ENCODE measurements at regions of chr6 and their contacts with region 1.

Region 1: DNA sequence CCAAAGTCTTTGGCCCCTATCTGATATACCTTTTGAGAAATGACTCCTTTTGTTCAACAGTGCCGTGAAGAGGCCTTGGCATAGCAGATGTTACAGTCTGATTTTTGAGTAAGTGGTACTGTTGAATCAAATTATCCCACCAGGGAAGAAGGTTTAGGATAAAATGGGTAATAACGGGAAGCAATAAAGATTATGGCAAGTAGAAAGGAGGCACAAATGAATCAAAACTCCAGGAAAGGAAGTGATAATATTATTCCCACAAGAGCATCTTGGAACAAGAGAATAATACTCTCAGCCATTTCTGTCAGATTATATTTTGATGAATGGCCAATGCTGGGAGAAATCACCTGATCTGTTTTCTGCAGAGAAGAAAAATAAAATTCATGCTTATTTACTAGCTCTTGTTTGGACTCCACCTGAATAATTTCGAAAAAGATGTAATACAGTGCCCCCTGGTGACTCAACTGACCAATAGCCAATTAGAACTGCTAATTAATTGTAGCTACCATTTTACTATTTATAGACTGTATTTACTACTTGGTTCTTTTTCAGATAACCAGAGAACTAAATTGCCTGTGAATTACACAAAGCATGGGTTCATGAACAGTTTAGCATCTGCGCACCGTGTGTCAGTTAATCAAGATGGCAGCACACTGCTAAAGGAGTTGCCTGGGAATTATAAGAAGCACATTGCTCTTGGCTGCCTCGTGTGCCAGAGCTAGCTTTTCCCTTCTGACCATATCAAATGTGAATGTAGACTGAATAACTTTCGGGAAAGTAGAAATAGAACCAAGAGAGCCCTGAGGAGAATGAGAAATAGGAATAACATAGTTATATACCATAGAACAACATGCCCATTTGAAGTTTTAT is 78.5 kb upstream of the TRDN start:
- DNase-seq: no peak

Region 2: DNA sequence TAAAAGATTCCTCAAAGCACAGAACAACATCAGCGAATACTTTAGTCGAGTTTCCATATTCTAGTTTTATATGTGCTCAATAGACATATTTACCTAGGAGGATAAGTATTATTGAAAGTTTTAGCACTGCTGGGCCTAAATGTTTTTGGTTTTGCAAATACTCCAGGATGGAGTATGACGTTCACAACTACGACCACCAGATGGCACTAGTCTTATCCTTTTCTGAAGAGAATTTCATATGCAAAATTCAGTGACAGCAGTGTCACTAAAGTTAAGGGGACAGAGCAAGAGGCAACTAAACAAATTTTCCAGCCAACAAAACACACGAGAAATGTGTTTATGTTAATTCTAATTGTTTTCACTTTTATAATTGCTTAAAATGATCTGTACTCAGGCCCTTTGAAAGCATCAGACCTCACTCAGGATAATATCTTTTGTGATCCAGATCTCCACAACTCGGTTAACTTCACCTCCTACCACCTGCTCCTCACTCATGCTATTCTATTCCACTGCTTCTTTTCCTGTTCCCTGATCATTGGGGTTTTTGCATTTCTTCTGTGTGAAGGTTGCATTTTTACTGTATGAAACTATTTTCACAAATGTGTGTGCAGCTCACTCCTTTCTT is 299.3 kb before region 1 on chr6:
- intact Hi-C with region 1: loop called (anchors 2 to 5 kb)
- DNase-seq: no peak

Measured in posterior vena cava (tissue), 2 donors.